Tibial artery (tissue), 4 donors: ENCODE measurements at regions of chr4 and their contacts with region 1.

Region 1: DNA sequence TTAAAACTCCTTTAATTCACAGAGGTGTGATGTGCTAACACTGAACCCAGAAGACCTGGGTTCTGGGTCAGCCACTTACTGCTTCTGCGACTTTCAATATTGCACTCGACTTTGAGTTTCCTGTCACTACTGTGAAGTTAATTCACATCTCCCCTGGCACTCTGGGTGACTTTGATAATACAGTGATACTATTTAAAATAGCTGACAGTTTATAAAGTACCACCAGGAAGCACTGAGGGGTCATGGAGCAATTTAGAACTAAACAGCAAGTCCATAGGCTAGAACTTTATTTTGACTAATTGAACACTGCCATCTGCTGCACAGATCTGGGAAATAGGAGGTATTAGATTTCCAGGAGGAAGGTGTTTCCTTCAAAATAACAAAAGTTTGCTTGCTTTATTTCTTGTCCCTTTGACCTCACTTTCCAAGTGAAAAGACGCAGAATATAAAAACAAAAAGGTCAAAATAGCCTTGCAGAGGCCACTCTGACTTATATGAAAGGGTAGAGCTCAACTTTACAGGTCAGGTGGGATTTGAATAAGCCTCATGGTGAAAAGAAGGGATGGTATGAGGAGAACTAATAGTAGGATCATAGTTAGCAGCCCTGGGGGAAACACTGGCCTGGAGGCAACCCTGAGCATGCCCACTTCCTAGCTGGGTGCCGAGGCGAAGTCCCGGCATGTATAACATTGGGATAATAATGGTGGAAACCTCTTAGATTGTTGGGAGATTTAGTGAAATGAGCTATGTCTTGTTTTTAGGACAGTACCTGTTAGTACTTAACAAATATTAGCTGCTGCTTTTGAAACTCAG is 53.4 kb downstream of the ZNF518B start:
- DNase-seq: no peak
- H3K4me3 ChIP-seq: no peak overlapping the region
- H3K27ac ChIP-seq: no peak overlapping the region
- H3K4me1 ChIP-seq: no peaks in the 10 kb centered on the region
- H3K27me3 ChIP-seq: no peaks in the 10 kb centered on the region
- CTCF ChIP-seq: peak; percentile 43 to 61

Region 2: DNA sequence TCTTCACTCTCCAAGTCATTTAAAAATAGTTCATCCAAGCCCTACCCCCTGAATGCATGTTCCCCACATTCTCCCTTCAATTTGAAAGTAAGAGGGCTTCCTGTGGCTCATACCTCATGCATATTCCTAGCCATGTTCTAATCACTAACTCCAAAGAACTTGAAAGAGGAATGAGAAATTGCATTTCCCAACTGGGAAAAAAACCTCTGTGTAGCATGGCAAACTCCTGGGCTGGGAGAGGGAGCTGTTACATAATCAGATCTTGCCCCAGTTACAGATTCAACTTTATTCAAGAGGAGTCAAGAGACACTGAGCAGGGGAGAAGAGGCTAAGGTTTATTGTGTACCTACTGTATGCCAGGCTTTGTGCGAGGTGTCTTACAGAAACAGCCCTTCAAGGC is 472.7 kb before region 1 on chr4:
- intact Hi-C with region 1: no loop called
- DNase-seq: no peak
- H3K4me3 ChIP-seq: no peak overlapping the region
- H3K27ac ChIP-seq: no peak overlapping the region
- H3K4me1 ChIP-seq: peaks cover 0 to 9% (median 0%) of the 10 kb centered on the region in 4 donors
- H3K27me3 ChIP-seq: no peaks in the 10 kb centered on the region
- CTCF ChIP-seq: no peak

Region 3: DNA sequence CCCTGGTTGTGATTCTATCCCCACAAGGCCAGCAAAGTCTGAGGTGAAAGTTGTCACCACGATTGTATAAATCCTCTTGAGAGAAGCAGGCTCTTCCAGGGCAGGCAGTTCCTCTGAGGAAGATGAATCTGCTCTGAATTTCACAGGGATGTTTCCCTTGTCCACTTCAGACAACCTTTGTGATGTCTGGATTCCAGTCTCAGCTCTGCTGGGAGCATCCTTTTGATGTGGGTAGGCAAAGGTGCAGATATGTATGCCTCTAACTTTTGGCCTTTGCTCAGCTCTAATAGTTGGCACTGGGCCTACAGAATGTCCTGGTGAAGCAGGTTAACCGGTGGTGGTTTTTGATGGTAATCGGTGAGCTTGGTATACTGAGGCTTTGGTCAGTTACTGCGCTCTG is 236.6 kb before region 1 on chr4:
- intact Hi-C with region 1: loop called (anchors 2 kb)
- DNase-seq: no peak
- H3K4me3 ChIP-seq: no peak overlapping the region
- H3K27ac ChIP-seq: no peak overlapping the region
- H3K4me1 ChIP-seq: peaks cover 0 to 11% (median 1%) of the 10 kb centered on the region in 4 donors
- H3K27me3 ChIP-seq: no peaks in the 10 kb centered on the region
- CTCF ChIP-seq: no peak